HepG2 (cell line): ENCODE measurements at regions of chr7 and their contacts with region 1.

Region 1: GRCh38 chr7:80210400-80210799 is 75.8 kb downstream of the GNAI1 start:
- DNase-seq: peak; percentile 96
- ATAC-seq: peak; percentile 100
- H3K4me3 ChIP-seq: no peak overlapping the region
- H3K27ac ChIP-seq: peak overlapping the region; percentile 61
- H3K4me1 ChIP-seq: peaks cover 54% of the 10 kb centered on the region
- H3K27me3 ChIP-seq: no peaks in the 10 kb centered on the region
- CTCF ChIP-seq: no peak
- EP300 ChIP-seq: peak; percentile 93 to 94
- POLR2A ChIP-seq: no peak
- RAD21 ChIP-seq: no peak

Region 2: DNA sequence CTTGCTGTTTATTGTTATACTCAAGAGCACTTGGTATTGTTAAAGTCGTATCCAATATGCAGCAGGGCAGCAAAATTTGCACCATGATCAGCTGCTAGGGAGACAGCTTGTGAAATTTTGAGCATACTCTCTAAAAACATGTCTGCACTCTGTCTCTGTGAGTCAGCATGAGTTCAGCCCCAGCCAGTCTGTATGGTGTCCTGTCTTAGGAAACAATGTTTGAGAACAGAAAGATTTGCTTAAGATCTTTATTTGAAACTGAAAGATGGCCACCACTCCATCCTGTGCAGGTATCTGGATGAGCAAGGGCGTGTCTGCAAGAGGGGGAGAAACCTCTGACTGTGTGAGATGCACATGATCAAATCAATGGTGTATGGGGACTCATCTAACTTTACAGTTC is 21.3 kb after region 1 on chr7:
- CTCF ChIA-PET with region 1: no interaction called
- POLR2A ChIA-PET with region 1: interaction called, 4 read pairs
- in situ Hi-C with region 1: no loop called
- intact Hi-C with region 1: loop called (anchors 2 kb)
- DNase-seq: no peak
- ATAC-seq: no peak
- H3K4me3 ChIP-seq: no peak overlapping the region
- H3K27ac ChIP-seq: no peak overlapping the region
- H3K4me1 ChIP-seq: peaks cover 16% of the 10 kb centered on the region
- H3K27me3 ChIP-seq: no peaks in the 10 kb centered on the region
- CTCF ChIP-seq: no peak
- EP300 ChIP-seq: no peak
- POLR2A ChIP-seq: no peak
- RAD21 ChIP-seq: no peak

Region 3: DNA sequence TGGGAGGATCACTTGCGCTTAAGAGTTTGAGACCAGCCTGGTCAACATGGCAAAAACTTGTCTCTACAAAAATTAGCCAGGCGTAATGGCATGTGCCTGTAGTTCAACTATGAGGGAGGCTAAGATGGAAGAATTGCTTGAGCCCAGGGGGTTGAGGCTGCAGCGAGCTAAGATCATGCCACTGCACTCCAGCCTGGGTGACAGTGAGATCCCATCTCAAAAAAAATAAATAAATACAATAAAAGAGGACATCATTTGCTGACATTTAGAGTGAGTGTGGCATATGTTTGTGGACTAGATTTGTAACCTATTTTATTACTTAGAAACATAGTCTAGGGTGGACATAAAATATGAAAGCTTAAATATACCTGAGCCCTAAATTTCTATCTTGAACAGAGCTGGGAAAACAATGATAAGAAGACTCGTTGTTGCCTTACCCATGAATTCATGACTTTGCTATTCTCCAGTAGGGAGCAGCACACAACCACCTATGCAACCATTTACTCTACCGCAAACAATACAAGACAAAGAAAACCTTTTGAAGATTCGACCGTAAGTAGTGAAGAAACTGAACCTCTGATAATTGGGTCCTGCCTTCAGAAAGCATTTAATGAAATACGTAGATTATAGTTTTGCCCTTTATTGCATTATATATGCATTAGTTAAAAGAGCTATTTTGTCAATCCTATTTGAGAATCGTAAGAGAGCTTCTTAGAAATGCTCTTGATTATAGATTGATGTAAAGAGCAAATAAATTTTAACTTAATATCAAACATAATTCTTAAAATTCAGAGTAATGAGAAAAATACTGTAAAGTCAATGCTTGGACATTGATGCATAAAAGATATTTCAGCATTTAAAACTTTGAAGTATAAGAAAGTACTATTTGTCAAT is 218.0 kb after region 1 on chr7:
- CTCF ChIA-PET with region 1: no interaction called
- POLR2A ChIA-PET with region 1: no interaction called
- in situ Hi-C with region 1: no loop called
- intact Hi-C with region 1: no loop called
- DNase-seq: peak; percentile 65
- ATAC-seq: peak; percentile 90
- H3K4me3 ChIP-seq: no peak overlapping the region
- H3K27ac ChIP-seq: no peak overlapping the region
- H3K4me1 ChIP-seq: no peaks in the 10 kb centered on the region
- H3K27me3 ChIP-seq: no peaks in the 10 kb centered on the region
- CTCF ChIP-seq: peak; percentile 81
- EP300 ChIP-seq: no peak
- POLR2A ChIP-seq: no peak
- RAD21 ChIP-seq: peak; percentile 82

Region 4: GRCh38 chr7:80478683-80479082 is 268.3 kb after region 1 on chr7:
- CTCF ChIA-PET with region 1: no interaction called
- POLR2A ChIA-PET with region 1: no interaction called
- in situ Hi-C with region 1: no loop called
- intact Hi-C with region 1: no loop called
- DNase-seq: no peak
- ATAC-seq: no peak
- H3K4me3 ChIP-seq: no peak overlapping the region
- H3K27ac ChIP-seq: no peak overlapping the region
- H3K4me1 ChIP-seq: no peaks in the 10 kb centered on the region
- H3K27me3 ChIP-seq: no peaks in the 10 kb centered on the region
- CTCF ChIP-seq: no peak
- EP300 ChIP-seq: no peak
- POLR2A ChIP-seq: no peak
- RAD21 ChIP-seq: no peak